Endothelial cell of umbilical vein (primary cell): ENCODE measurements at regions of chr6 and their contacts with region 1.

Region 1: GRCh38 chr6:30130887-30131862 is 4.8 kb upstream of the TRIM40 start:
- DNase-seq: peak; percentile 57
- H3K4me3 ChIP-seq: no peak overlapping the region
- H3K27ac ChIP-seq: no peak overlapping the region
- H3K4me1 ChIP-seq: no peaks in the 10 kb centered on the region
- H3K27me3 ChIP-seq: peaks cover 49 to 74% of the 10 kb centered on the region in 2 experiments
- CTCF ChIP-seq: peak; percentile 95
- POLR2A ChIP-seq: no peak

Region 2: GRCh38 chr6:29414588-29414987 is 716.6 kb before region 1 on chr6 and contains the start of gene OR12D1:
- CTCF ChIA-PET with region 1: no interaction called
- POLR2A ChIA-PET with region 1: no interaction called
- dilution Hi-C with region 1: no loop called
- intact Hi-C with region 1: no loop called
- DNase-seq: no peak
- H3K4me3 ChIP-seq: no peak within 1 kb of the TSS
- H3K27ac ChIP-seq: no peak within 1 kb of the TSS
- H3K4me1 ChIP-seq: no peaks in the 10 kb centered on the region
- H3K27me3 ChIP-seq: no peaks in the 10 kb centered on the region
- CTCF ChIP-seq: no peak
- POLR2A ChIP-seq: no peak
- total RNA-seq, gene OR12D1: not detected in 2 replicates

Region 3: DNA sequence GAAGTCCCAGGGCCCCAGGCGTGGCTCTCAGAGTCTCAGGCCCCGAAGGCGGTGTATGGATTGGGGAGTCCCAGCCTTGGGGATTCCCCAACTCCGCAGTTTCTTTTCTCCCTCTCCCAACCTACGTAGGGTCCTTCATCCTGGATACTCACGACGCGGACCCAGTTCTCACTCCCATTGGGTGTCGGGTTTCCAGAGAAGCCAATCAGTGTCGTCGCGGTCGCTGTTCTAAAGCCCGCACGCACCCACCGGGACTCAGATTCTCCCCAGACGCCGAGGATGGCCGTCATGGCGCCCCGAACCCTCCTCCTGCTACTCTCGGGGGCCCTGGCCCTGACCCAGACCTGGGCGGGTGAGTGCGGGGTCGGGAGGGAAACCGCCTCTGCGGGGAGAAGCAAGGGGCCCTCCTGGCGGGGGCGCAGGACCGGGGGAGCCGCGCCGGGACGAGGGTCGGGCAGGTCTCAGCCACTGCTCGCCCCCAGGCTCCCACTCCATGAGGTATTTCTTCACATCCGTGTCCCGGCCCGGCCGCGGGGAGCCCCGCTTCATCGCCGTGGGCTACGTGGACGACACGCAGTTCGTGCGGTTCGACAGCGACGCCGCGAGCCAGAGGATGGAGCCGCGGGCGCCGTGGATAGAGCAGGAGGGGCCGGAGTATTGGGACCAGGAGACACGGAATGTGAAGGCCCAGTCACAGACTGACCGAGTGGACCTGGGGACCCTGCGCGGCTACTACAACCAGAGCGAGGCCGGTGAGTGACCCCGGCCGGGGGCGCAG is 188.7 kb before region 1 on chr6 and contains the start of gene HLA-A:
- CTCF ChIA-PET with region 1: no interaction called
- POLR2A ChIA-PET with region 1: no interaction called
- dilution Hi-C with region 1: no loop called
- intact Hi-C with region 1: no loop called
- DNase-seq: peak; percentile 97
- H3K4me3 ChIP-seq: peak within 1 kb of the TSS; percentile 52 to 62 (median 55)
- H3K27ac ChIP-seq: peak within 1 kb of the TSS; percentile 67
- H3K4me1 ChIP-seq: no peaks in the 10 kb centered on the region
- H3K27me3 ChIP-seq: peaks cover 0 to 1% of the 10 kb centered on the region in 2 experiments
- CTCF ChIP-seq: no peak
- POLR2A ChIP-seq: peak; percentile 90
- total RNA-seq, gene HLA-A: 153 and 294 TPM in 2 replicates

Region 4: DNA sequence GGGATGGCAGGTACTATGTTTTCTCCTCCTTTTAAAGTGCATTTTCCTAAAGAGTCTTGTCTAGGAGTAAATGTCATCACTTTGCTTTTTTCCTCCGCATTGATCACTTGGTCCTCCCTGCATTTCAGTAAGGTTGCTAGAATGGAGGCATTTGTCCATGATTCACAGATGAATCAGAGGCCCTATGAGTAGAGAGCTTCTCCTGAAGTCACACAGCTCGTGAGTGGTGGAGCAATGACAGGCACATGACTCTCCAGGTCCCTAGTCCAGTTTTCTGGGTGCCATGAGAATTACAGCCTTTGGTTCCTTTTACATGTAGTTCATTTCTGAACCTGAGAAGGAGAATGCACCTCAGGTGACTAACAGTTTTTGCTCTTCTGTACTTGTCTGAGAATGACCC is 138.4 kb before region 1 on chr6:
- CTCF ChIA-PET with region 1: interaction called, 4 read pairs
- POLR2A ChIA-PET with region 1: no interaction called
- dilution Hi-C with region 1: no loop called
- intact Hi-C with region 1: loop called (anchors 10 kb)
- DNase-seq: no peak
- H3K4me3 ChIP-seq: no peak overlapping the region
- H3K27ac ChIP-seq: no peak overlapping the region
- H3K4me1 ChIP-seq: peaks cover 2% of the 10 kb centered on the region
- H3K27me3 ChIP-seq: peaks cover 4 to 15% of the 10 kb centered on the region in 2 experiments
- CTCF ChIP-seq: no peak
- POLR2A ChIP-seq: no peak

Region 5: GRCh38 chr6:30061092-30061857 is 69.9 kb before region 1 on chr6 and contains the start of gene POLR1H:
- CTCF ChIA-PET with region 1: interaction called, 16 read pairs
- POLR2A ChIA-PET with region 1: no interaction called
- dilution Hi-C with region 1: no loop called
- intact Hi-C with region 1: no loop called
- DNase-seq: peak; percentile 94
- H3K4me3 ChIP-seq: peak within 1 kb of the TSS; percentile 78 to 94 (median 80)
- H3K27ac ChIP-seq: peak within 1 kb of the TSS; percentile 57
- H3K4me1 ChIP-seq: peaks cover 21% of the 10 kb centered on the region
- H3K27me3 ChIP-seq: no peaks in the 10 kb centered on the region
- CTCF ChIP-seq: peak in 1 of 2 donors; percentile 7
- POLR2A ChIP-seq: peak; percentile 98
- total RNA-seq, gene POLR1H: 32.5 and 42.5 TPM in 2 replicates

Region 6: DNA sequence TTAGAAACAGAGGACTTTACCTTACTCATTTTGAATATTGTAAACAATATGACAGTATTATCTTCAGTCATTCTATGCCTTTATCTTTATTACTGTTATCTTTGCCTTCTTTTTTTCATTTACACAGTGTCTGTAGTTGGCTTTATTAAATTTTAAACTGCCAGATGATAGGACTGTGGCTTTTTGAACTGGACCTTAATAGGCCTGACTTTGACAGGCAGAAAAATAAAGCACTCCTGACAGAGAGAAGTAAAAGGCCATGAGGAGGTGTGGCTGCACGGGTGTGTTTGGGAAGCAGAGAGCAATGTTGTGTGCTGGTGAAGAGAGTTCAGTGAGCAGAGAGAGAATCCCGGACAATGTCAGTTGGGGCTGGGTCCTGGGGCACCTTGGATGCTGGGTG is 12.6 kb after region 1 on chr6:
- CTCF ChIA-PET with region 1: interaction called, 11 read pairs
- POLR2A ChIA-PET with region 1: no interaction called
- dilution Hi-C with region 1: no loop called
- intact Hi-C with region 1: no loop called
- DNase-seq: no peak
- H3K4me3 ChIP-seq: no peak overlapping the region
- H3K27ac ChIP-seq: no peak overlapping the region
- H3K4me1 ChIP-seq: no peaks in the 10 kb centered on the region
- H3K27me3 ChIP-seq: peaks cover 20 to 36% of the 10 kb centered on the region in 2 experiments
- CTCF ChIP-seq: no peak
- POLR2A ChIP-seq: no peak

Region 7: DNA sequence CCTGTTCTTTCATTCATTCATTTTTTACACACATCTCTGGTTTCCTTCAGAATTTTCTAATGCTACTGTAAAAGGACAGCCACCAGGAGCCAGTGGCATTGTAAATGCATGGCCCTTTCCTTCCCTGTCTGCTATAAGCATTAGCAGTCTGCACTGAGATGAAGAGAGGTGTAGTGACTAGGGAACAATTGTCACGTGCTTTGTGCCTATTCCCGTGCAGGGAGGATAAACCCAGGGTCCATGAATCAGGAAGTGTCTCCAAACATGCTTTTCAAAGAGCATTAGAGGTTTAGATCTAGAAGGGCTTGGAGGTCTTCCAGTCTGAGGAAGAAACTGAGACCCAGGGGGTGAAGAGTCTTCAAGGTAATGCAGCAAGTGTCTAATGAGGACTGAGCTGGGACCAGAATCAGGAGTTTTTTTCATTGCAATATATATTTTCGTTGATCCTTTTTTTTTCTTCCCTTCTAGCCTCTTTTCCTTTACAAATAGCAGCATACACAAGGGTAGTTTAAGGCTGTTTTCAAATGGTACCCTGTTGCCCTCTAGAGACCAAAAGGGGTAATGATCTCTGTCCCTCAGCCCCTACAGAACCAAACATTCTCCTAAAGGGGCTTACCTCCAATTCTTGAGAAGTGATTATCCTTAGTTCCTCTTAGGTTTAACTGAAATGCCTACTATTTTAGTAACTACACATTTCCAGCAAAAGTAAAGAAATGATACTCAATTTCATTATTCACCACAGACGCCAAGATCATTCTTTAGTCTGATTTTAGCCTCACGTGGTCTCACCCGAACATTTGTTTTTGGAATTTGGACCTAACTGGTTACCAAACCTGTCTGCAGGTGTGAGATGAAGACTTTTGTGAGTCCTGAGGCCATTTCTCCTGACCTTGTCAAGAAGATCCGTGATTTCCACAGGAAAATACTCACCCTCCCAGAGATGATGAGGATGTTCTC is 38.8 kb after region 1 on chr6:
- CTCF ChIA-PET with region 1: interaction called, 15 read pairs
- POLR2A ChIA-PET with region 1: no interaction called
- dilution Hi-C with region 1: no loop called
- intact Hi-C with region 1: no loop called
- DNase-seq: peak; percentile 66
- H3K4me3 ChIP-seq: no peak overlapping the region
- H3K27ac ChIP-seq: no peak overlapping the region
- H3K4me1 ChIP-seq: no peaks in the 10 kb centered on the region
- H3K27me3 ChIP-seq: peaks cover 51 to 74% of the 10 kb centered on the region in 2 experiments
- CTCF ChIP-seq: peak; percentile 57 to 74
- POLR2A ChIP-seq: no peak

Region 8: DNA sequence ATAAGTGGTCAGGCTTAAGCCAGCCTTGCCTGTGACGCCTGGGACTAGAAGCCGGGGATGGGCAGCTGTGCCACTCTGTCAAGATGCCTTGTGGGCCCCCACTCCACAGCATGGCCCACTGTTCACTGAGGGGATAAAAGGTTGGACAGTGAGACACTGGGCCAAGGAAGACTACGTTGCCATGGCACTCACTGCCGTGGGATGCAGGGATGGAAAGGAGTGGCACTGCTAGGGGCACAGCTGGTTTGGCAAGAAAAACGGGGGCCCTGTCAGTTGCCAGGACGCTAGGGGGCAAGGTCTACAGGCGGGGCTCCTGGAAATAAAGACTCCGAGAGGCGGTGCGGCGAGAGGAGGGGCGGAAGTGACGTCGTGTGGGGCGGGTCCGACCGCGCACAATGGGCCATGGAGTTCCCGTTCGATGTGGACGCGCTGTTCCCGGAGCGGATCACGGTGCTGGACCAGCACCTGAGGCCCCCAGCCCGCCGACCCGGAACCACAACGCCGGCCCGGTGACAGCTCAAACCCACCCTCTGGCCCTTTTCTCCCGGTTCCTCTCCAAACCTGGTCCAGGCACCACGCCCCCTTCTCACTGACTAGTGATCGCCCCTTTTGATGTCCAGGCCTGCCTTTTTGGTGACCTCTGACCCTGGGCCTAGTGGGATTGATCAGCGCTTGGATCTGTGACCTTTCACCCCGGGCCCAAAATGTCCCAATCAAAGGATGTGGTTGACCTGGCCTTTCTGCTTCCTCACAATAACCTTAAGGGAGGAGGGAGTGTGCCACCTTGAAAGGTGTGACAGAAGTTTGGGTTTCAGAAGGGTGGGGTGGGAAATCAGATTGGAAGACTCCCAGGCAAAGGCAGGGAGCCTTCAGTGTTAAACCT is 495.6 kb after region 1 on chr6 and contains the start of gene ATAT1:
- CTCF ChIA-PET with region 1: no interaction called
- POLR2A ChIA-PET with region 1: no interaction called
- dilution Hi-C with region 1: no loop called
- intact Hi-C with region 1: no loop called
- DNase-seq: peak; percentile 89
- H3K4me3 ChIP-seq: peak within 1 kb of the TSS; percentile 22 to 64 (median 51)
- H3K27ac ChIP-seq: peak within 1 kb of the TSS; percentile 66
- H3K4me1 ChIP-seq: peaks cover 8% of the 10 kb centered on the region
- H3K27me3 ChIP-seq: no peaks in the 10 kb centered on the region
- CTCF ChIP-seq: peak; percentile 31 to 50
- POLR2A ChIP-seq: peak; percentile 97
- total RNA-seq, gene ATAT1: 18.4 and 20.2 TPM in 2 replicates